ENCODE measurements at regions of chr2 and their contacts with region 1.

Region 1: DNA sequence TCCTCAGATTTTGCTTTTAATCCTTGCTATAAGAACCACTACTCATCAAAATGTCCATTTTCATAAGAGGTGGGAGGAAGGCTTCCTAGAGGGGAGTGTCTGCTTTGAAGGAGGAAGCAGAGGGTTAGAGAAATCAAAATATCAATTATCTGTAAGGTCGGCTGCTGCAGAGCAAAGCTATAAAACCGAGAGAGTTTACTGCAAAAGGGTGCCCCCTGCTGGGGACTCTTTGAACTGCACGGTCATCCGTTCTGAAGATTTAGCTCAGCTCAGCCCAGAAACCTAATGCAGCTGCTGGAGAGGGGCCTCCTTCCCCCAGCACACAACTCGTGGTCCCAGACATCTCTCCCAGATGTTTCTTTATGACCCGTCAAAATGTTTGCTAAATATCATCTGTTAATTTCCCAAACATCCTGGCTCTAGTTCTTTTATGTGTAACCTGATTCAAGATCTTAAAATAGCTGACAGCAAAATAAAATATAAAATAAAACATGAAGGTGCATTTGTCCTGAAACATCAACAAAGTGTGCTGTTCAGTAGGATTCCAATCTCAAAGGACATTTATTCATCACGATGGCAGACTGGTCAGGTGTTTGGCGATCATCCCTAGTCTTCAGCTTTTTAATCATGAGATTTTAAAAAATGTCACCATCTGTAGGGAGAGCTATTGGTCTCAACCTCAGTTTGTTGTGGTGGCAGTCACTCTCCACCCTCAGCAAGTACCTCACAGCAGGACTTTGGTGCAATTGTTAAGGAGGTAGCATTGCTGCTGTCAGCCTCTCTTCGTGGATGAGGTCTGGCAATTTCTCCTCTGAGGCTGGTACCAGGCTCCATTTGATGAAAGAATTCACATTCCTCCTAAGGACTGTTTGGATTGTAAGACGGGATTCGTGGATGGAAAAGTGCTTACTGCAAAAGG is 185.9 kb downstream of the MTX2 start:
- DNase-seq: peak; percentile 17 to 81 (median 69)
- ATAC-seq: peak in 3 of 4 experiments; percentile 51 to 61 (median 54)
- H3K4me3 ChIP-seq: no peak overlapping the region
- H3K4me3 Mint-ChIP-seq: no peak overlapping the region
- H3K27ac ChIP-seq: no peak overlapping the region
- H3K27ac Mint-ChIP-seq: no peak overlapping the region
- H3K4me1 ChIP-seq: no peaks in the 10 kb centered on the region
- H3K4me1 Mint-ChIP-seq: peaks cover 0 to 2% (median 0%) of the 10 kb centered on the region in 3 donors
- H3K27me3 ChIP-seq: peaks cover 0 to 7% of the 10 kb centered on the region in 2 experiments
- H3K27me3 Mint-ChIP-seq: peaks cover 43 to 46% of the 10 kb centered on the region in 2 donors

Region 2: DNA sequence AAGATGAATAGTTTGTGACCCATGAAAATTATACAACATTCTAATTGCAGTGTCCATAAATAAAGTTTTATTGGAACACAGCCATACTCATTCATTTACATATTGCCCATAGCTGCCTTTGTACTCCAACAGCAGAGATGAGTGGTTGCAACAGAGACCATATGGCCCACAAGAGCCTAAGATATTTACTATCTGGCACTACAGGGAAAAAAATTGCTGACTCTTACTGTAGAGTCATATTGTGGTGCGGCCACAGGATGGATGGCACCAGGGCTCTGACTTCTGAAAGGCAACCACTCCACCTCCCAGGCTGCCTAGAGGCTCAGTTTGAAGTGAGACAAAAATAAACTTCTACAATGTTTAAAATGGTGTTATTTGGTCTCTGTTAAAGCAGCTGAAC is 869.7 kb before region 1 on chr2:
- CTCF ChIA-PET with region 1: no interaction called
- POLR2A ChIA-PET with region 1: no interaction called
- DNase-seq: no peak
- ATAC-seq: no peak
- H3K4me3 ChIP-seq: no peak overlapping the region
- H3K4me3 Mint-ChIP-seq: no peak overlapping the region
- H3K27ac ChIP-seq: no peak overlapping the region
- H3K27ac Mint-ChIP-seq: no peak overlapping the region
- H3K4me1 ChIP-seq: no peaks in the 10 kb centered on the region
- H3K4me1 Mint-ChIP-seq: no peaks in the 10 kb centered on the region
- H3K27me3 ChIP-seq: no peaks in the 10 kb centered on the region
- H3K27me3 Mint-ChIP-seq: no peaks in the 10 kb centered on the region

Region 3: GRCh38 chr2:176484838-176485237 is 29.7 kb after region 1 on chr2:
- CTCF ChIA-PET with region 1: interaction called, 3 to 12 read pairs
- POLR2A ChIA-PET with region 1: no interaction called
- DNase-seq: no peak
- ATAC-seq: no peak
- H3K4me3 ChIP-seq: no peak overlapping the region
- H3K4me3 Mint-ChIP-seq: no peak overlapping the region
- H3K27ac ChIP-seq: no peak overlapping the region
- H3K27ac Mint-ChIP-seq: no peak overlapping the region
- H3K4me1 ChIP-seq: no peaks in the 10 kb centered on the region
- H3K4me1 Mint-ChIP-seq: no peaks in the 10 kb centered on the region
- H3K27me3 ChIP-seq: peaks cover 0 to 4% of the 10 kb centered on the region in 2 experiments
- H3K27me3 Mint-ChIP-seq: peaks cover 37 to 45% of the 10 kb centered on the region in 2 donors